GM13977 (cell line): ENCODE measurements at regions of chr19 and their contacts with region 1.

Region 1: DNA sequence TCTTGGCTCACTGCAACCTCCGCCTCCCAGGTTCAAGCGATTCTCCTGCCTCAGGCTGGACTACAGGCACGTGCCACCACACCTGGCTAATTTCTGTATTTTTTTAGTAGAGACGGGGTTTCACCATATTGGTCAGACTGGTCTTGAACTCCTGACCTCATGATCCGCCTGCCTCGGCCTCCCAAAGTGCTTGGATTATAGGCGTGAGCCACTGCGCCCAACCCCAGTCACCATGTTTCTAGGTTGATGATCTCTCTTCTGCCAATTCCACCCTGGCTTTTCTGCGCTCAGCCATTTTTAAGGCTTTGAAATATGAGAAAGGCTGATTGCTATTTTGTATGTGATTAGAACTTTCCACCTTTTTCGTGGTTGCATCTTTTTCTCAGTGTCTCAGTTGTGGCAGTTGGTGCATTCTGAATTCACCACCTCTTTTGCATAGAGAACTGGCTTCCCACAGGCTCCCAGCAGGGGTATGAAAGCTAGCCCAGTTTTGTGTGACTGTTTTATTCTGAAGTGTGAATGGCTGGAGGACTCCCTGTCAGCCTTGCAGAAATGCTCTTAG is 15.5 kb downstream of the CEACAM1 start:
- DNase-seq: peak; percentile 61
- CTCF ChIP-seq: no peak

Region 2: DNA sequence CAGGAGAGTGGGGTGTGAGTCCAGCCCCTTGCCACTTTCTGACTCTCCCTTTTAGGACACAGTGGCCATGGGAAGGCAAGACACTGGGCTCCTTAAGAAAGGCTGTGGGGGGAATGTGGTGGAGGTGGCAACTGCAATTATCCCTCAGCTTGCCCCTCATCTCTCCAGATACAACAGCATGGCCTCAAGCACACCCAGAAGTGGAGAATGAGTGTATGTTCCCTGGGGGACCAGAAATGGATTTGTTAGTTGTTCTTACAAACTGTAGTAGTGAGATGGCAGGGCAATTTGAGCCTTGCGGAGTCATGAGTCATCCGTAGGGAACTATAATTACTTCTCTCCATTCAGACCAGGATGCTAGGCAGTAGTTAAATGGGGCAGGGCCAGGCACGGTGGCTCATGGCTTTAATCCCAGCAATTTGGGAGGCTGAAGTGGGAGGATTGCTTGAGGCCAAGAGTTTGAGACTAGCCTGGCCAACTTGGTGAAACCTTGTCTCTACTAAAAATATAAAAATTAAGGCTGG is 44.5 kb before region 1 on chr19:
- in situ Hi-C with region 1: loop called (anchors 5 kb)
- DNase-seq: no peak
- CTCF ChIP-seq: no peak